Activated CD4-positive, alpha-beta memory T cell treated with anti-CD3 and anti-CD28 coated beads for 36 hours (primary cell): ENCODE measurements at regions of chr19 and their contacts with region 1.

Region 1: GRCh38 chr19:47243776-47244547 is 12.4 kb upstream of the CCDC9 start:
- DNase-seq: peak; percentile 96
- H3K4me3 Mint-ChIP-seq: peak overlapping the region; percentile 76
- H3K27ac Mint-ChIP-seq: peak overlapping the region; percentile 90
- H3K4me1 Mint-ChIP-seq: peaks cover 25% of the 10 kb centered on the region
- H3K27me3 Mint-ChIP-seq: peaks cover under 1% of the 10 kb centered on the region

Region 2: GRCh38 chr19:47019431-47020041 is 224.4 kb before region 1 on chr19 and contains the start of gene NPAS1:
- CTCF ChIA-PET with region 1: interaction called, 31 read pairs
- POLR2A ChIA-PET with region 1: no interaction called
- intact Hi-C with region 1: loop called (anchors 5 kb)
- DNase-seq: no peak
- H3K4me3 Mint-ChIP-seq: no peak within 1 kb of the TSS
- H3K27ac Mint-ChIP-seq: no peak within 1 kb of the TSS
- H3K4me1 Mint-ChIP-seq: peaks cover 15% of the 10 kb centered on the region
- H3K27me3 Mint-ChIP-seq: peaks cover 34% of the 10 kb centered on the region
- total RNA-seq, gene NPAS1: not detected

Region 3: GRCh38 chr19:47130591-47131227 is 113.3 kb before region 1 on chr19 and contains the start of gene SAE1:
- CTCF ChIA-PET with region 1: interaction called, 48 read pairs
- POLR2A ChIA-PET with region 1: interaction called, 8 read pairs
- intact Hi-C with region 1: loop called (anchors 2 kb)
- DNase-seq: peak; percentile 97
- H3K4me3 Mint-ChIP-seq: peak within 1 kb of the TSS; percentile 99
- H3K27ac Mint-ChIP-seq: peak within 1 kb of the TSS; percentile 94
- H3K4me1 Mint-ChIP-seq: peaks cover 47% of the 10 kb centered on the region
- H3K27me3 Mint-ChIP-seq: peaks cover 4% of the 10 kb centered on the region
- total RNA-seq, gene SAE1: 154 to 157 TPM

Region 4: GRCh38 chr19:47176627-47177090 is 67.3 kb before region 1 on chr19:
- CTCF ChIA-PET with region 1: interaction called, 28 read pairs
- POLR2A ChIA-PET with region 1: interaction called, 3 read pairs
- intact Hi-C with region 1: loop called (anchors 1 kb)
- DNase-seq: peak; percentile 64
- H3K4me3 Mint-ChIP-seq: peak overlapping the region; percentile 49
- H3K27ac Mint-ChIP-seq: peak overlapping the region; percentile 90
- H3K4me1 Mint-ChIP-seq: peaks cover 61% of the 10 kb centered on the region
- H3K27me3 Mint-ChIP-seq: no peaks in the 10 kb centered on the region

Region 5: GRCh38 chr19:47225746-47226425 is 18.1 kb before region 1 on chr19:
- CTCF ChIA-PET with region 1: interaction called, 141 read pairs
- POLR2A ChIA-PET with region 1: interaction called, 32 read pairs
- intact Hi-C with region 1: loop called (anchors 1 kb)
- DNase-seq: peak; percentile 88
- H3K4me3 Mint-ChIP-seq: peak overlapping the region; percentile 77
- H3K27ac Mint-ChIP-seq: peak overlapping the region; percentile 89
- H3K4me1 Mint-ChIP-seq: peaks cover 10% of the 10 kb centered on the region
- H3K27me3 Mint-ChIP-seq: no peaks in the 10 kb centered on the region

Region 6: GRCh38 chr19:47273313-47273977 is 29.5 kb after region 1 on chr19:
- CTCF ChIA-PET with region 1: interaction called, 16 read pairs
- POLR2A ChIA-PET with region 1: no interaction called
- intact Hi-C with region 1: no loop called
- DNase-seq: peak; percentile 93
- H3K4me3 Mint-ChIP-seq: peak overlapping the region; percentile 92
- H3K27ac Mint-ChIP-seq: peak overlapping the region; percentile 97
- H3K4me1 Mint-ChIP-seq: peaks cover 21% of the 10 kb centered on the region
- H3K27me3 Mint-ChIP-seq: no peaks in the 10 kb centered on the region

Region 7: GRCh38 chr19:47549261-47549862 is 305.4 kb after region 1 on chr19:
- CTCF ChIA-PET with region 1: no interaction called
- POLR2A ChIA-PET with region 1: no interaction called
- intact Hi-C with region 1: no loop called
- DNase-seq: no peak
- H3K4me3 Mint-ChIP-seq: no peak overlapping the region
- H3K27ac Mint-ChIP-seq: no peak overlapping the region
- H3K4me1 Mint-ChIP-seq: peaks cover 2% of the 10 kb centered on the region
- H3K27me3 Mint-ChIP-seq: peaks cover 4% of the 10 kb centered on the region